AG04450 (cell line): ENCODE measurements at regions of chr3 and their contacts with region 1.

Region 1: GRCh38 chr3:27712136-27713077 is 9.7 kb downstream of the EOMES start:
- DNase-seq: peak; percentile 37
- H3K4me3 ChIP-seq: peak overlapping the region; percentile 57
- H3K27ac ChIP-seq: no peak overlapping the region
- H3K27me3 ChIP-seq: peaks cover 72% of the 10 kb centered on the region
- CTCF ChIP-seq: peak; percentile 91

Region 2: GRCh38 chr3:27289769-27290413 is 422.5 kb before region 1 on chr3:
- CTCF ChIA-PET with region 1: interaction called, 11 read pairs
- POLR2A ChIA-PET with region 1: no interaction called
- DNase-seq: no peak
- H3K4me3 ChIP-seq: no peak overlapping the region
- H3K27ac ChIP-seq: no peak overlapping the region
- H3K27me3 ChIP-seq: no peaks in the 10 kb centered on the region
- CTCF ChIP-seq: no peak

Region 3: DNA sequence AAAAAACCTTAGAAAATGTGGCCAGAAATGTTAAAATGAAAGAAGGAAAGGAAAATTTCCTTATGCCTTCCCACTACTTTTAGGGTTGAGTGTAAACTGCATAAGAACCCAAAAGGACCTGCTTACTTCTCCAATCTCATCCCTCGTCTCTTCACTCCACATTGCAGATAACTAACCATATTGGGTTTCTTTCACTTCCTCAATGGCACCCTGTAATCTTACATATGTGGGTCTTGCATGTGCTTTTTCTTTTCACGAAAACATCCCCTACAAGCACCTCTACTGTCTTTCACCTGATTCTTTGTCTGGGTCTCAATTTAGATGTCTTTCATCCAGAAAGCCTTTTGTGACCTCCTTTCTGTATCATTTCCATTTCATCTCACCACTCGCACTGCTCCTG is 13.3 kb before region 1 on chr3:
- CTCF ChIA-PET with region 1: interaction called, 16 read pairs
- POLR2A ChIA-PET with region 1: interaction called, 8 read pairs
- DNase-seq: no peak
- H3K4me3 ChIP-seq: no peak overlapping the region
- H3K27ac ChIP-seq: no peak overlapping the region
- H3K27me3 ChIP-seq: no peaks in the 10 kb centered on the region
- CTCF ChIP-seq: no peak

Region 4: DNA sequence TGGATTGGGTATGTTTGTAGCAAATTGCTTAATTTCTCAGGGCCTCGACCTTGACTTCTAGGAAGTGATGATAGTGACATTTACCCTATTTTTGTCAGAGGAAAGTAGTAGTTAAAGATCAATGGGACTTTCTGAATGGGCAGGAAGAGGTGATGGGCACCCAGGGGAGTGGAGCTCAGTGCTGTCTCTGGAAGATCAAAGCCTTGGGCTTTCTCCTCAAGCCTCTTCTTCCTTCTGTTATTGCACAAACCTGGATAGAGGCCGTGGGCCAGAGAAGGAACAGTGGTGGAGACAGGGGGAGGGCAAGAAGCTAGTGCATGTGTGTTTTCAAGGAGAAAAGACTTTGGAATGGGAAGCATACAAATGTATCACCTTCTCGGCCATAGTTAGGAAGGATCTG is 54.6 kb after region 1 on chr3:
- CTCF ChIA-PET with region 1: interaction called, 11 read pairs
- POLR2A ChIA-PET with region 1: no interaction called
- DNase-seq: no peak
- H3K4me3 ChIP-seq: no peak overlapping the region
- H3K27ac ChIP-seq: no peak overlapping the region
- H3K27me3 ChIP-seq: no peaks in the 10 kb centered on the region
- CTCF ChIP-seq: no peak

Region 5: GRCh38 chr3:28308196-28308595 is 595.8 kb after region 1 on chr3:
- CTCF ChIA-PET with region 1: interaction called, 28 read pairs
- POLR2A ChIA-PET with region 1: no interaction called
- DNase-seq: no peak
- H3K4me3 ChIP-seq: no peak overlapping the region
- H3K27ac ChIP-seq: no peak overlapping the region
- H3K27me3 ChIP-seq: no peaks in the 10 kb centered on the region
- CTCF ChIP-seq: no peak

Region 6: DNA sequence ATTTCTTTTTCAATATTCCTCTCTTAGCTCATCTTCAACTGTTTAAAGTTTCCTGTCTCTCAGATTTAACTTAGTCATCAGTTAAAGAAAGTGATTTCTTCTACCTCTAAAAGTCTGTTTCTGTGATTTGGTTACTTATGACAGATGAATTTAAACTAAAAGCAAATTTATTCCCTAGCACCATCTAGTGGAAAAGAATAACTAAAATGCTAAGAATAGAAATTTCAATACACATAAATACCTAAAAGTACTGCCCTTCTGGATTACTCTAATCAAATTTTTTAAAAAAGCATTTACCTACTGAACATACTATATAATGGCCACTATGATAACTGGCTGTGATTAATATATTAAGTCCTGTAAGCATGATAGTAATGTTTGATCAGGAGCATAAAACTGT is 622.1 kb after region 1 on chr3:
- CTCF ChIA-PET with region 1: interaction called, 113 read pairs
- POLR2A ChIA-PET with region 1: no interaction called
- DNase-seq: no peak
- H3K4me3 ChIP-seq: no peak overlapping the region
- H3K27ac ChIP-seq: no peak overlapping the region
- H3K27me3 ChIP-seq: no peaks in the 10 kb centered on the region
- CTCF ChIP-seq: peak; percentile 41